Head of caudate nucleus (tissue), 42 donors: ENCODE measurements at regions of chr5 and their contacts with region 1.

Region 1: GRCh38 chr5:60677844-60678664 is 21.9 kb downstream of the DEPDC1B start:
- DNase-seq: peak in 2 of 42 donors; percentile 11 to 21

Region 2: GRCh38 chr5:60929024-60929423 is 251.0 kb after region 1 on chr5:
- intact Hi-C with region 1: loop called (anchors 10 kb)
- DNase-seq: no peak